Endothelial cell of umbilical vein (primary cell): ENCODE measurements at regions of chr7 and their contacts with region 1.

Region 1: DNA sequence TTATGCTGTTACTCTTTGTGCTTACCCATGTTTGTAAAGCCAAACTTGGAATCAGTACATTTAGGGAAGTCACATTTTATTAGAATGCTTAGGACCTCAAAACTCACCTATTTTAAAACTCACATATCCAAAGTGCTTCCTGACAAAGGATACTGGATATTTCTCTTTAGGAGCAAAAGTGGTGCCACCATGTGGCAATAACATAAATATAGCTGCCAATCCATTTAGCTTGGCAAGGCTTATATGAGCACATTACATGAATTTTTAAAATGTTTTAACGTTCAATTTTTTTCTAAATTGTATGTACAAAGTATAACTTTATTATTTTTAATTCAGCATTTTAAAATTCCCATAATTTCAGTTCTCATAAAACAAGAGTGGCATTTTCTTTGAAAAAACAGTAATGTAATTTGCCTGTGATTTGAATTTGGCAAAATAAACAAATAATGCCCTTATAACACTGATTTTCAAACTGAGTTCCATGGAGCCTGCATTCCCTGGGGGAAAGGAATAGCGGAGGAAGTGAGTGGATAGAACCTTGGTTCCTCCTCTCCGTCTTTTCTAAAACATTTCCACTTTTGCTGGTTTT is 75.4 kb downstream of the HDAC9 start:
- DNase-seq: peak; percentile 72
- H3K4me3 ChIP-seq: no peak overlapping the region
- H3K27ac ChIP-seq: no peak overlapping the region
- H3K4me1 ChIP-seq: no peaks in the 10 kb centered on the region
- H3K27me3 ChIP-seq: no peaks in the 10 kb centered on the region
- CTCF ChIP-seq: peak; percentile 21 to 28
- POLR2A ChIP-seq: no peak

Region 2: DNA sequence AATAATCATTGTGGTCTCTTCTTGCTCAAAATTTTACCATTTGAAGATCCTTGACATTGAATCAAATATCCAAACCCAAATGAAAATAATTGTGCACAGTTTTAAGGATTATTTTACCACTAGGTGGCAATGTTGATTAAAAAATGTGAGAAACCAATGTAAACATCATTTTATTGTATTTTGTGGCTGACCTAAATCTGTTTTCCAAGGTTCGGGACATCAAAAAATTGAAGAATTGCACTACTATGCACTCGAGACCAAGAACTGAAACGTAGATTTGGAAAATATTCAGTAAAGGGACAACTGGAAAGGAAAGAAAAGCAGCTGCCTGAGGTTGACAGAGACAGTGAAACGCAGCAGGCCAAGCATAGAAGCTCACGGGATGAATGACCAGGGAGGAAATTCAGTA is 890.0 kb before region 1 on chr7:
- CTCF ChIA-PET with region 1: interaction called, 10 read pairs
- POLR2A ChIA-PET with region 1: no interaction called
- dilution Hi-C with region 1: no loop called
- intact Hi-C with region 1: no loop called
- DNase-seq: peak; percentile 31
- H3K4me3 ChIP-seq: no peak overlapping the region
- H3K27ac ChIP-seq: no peak overlapping the region
- H3K4me1 ChIP-seq: peaks cover 4% of the 10 kb centered on the region
- H3K27me3 ChIP-seq: no peaks in the 10 kb centered on the region
- CTCF ChIP-seq: peak in 1 of 2 donors; percentile 16
- POLR2A ChIP-seq: no peak

Region 3: GRCh38 chr7:18508443-18509427 is 62.2 kb before region 1 on chr7:
- CTCF ChIA-PET with region 1: interaction called, 18 read pairs
- POLR2A ChIA-PET with region 1: no interaction called
- dilution Hi-C with region 1: no loop called
- intact Hi-C with region 1: loop called (anchors 1 kb)
- DNase-seq: peak; percentile 93
- H3K4me3 ChIP-seq: peak overlapping the region in 1 of 3 experiments; percentile 64
- H3K27ac ChIP-seq: peak overlapping the region; percentile 94
- H3K4me1 ChIP-seq: peaks cover 31% of the 10 kb centered on the region
- H3K27me3 ChIP-seq: no peaks in the 10 kb centered on the region
- CTCF ChIP-seq: no peak
- POLR2A ChIP-seq: no peak

Region 4: GRCh38 chr7:18558503-18558902 is 12.5 kb before region 1 on chr7:
- CTCF ChIA-PET with region 1: interaction called, 19 read pairs
- POLR2A ChIA-PET with region 1: no interaction called
- dilution Hi-C with region 1: no loop called
- intact Hi-C with region 1: no loop called
- DNase-seq: no peak
- H3K4me3 ChIP-seq: no peak overlapping the region
- H3K27ac ChIP-seq: no peak overlapping the region
- H3K4me1 ChIP-seq: peaks cover 3% of the 10 kb centered on the region
- H3K27me3 ChIP-seq: no peaks in the 10 kb centered on the region
- CTCF ChIP-seq: no peak
- POLR2A ChIP-seq: no peak

Region 5: GRCh38 chr7:18590744-18591340 is 19.9 kb after region 1 on chr7:
- CTCF ChIA-PET with region 1: interaction called, 11 read pairs
- POLR2A ChIA-PET with region 1: no interaction called
- dilution Hi-C with region 1: no loop called
- intact Hi-C with region 1: no loop called
- DNase-seq: peak; percentile 59
- H3K4me3 ChIP-seq: no peak overlapping the region
- H3K27ac ChIP-seq: no peak overlapping the region
- H3K4me1 ChIP-seq: no peaks in the 10 kb centered on the region
- H3K27me3 ChIP-seq: no peaks in the 10 kb centered on the region
- CTCF ChIP-seq: peak; percentile 30 to 38
- POLR2A ChIP-seq: no peak